Natural killer cell (primary cell): ENCODE measurements at regions of chr1 and their contacts with region 1.

Region 1: GRCh38 chr1:171741872-171742576 is at the start of gene VAMP4:
- DNase-seq: peak; percentile 82 to 92
- ATAC-seq: peak; percentile 86 to 95 (median 90)
- H3K4me3 ChIP-seq: peak within 1 kb of the TSS; percentile 86
- H3K4me3 Mint-ChIP-seq: peak within 1 kb of the TSS; percentile 98
- H3K27ac ChIP-seq: peak within 1 kb of the TSS; percentile 94
- H3K27ac Mint-ChIP-seq: peak within 1 kb of the TSS; percentile 96 to 100
- H3K4me1 ChIP-seq: peaks cover 8% of the 10 kb centered on the region
- H3K4me1 Mint-ChIP-seq: peaks cover 54 to 58% of the 10 kb centered on the region in 2 donors
- H3K27me3 ChIP-seq: no peaks in the 10 kb centered on the region
- H3K27me3 Mint-ChIP-seq: no peaks in the 10 kb centered on the region
- CTCF ChIP-seq: no peak
- total RNA-seq, gene VAMP4: 17.5 to 24.2 (median 20.7) TPM

Region 2: GRCh38 chr1:171654942-171655745 is 86.9 kb before region 1 on chr1:
- intact Hi-C with region 1: loop called (anchors 2 kb)
- DNase-seq: peak; percentile 59 to 69
- ATAC-seq: peak; percentile 68 to 85 (median 69)
- H3K4me3 ChIP-seq: no peak overlapping the region
- H3K4me3 Mint-ChIP-seq: peak overlapping the region; percentile 17
- H3K27ac ChIP-seq: no peak overlapping the region
- H3K27ac Mint-ChIP-seq: no peak overlapping the region
- H3K4me1 ChIP-seq: peaks cover 7% of the 10 kb centered on the region
- H3K4me1 Mint-ChIP-seq: peaks cover 0 to 11% of the 10 kb centered on the region in 2 donors
- H3K27me3 ChIP-seq: no peaks in the 10 kb centered on the region
- H3K27me3 Mint-ChIP-seq: peaks cover 37 to 61% of the 10 kb centered on the region in 2 donors
- CTCF ChIP-seq: peak; percentile 47

Region 3: DNA sequence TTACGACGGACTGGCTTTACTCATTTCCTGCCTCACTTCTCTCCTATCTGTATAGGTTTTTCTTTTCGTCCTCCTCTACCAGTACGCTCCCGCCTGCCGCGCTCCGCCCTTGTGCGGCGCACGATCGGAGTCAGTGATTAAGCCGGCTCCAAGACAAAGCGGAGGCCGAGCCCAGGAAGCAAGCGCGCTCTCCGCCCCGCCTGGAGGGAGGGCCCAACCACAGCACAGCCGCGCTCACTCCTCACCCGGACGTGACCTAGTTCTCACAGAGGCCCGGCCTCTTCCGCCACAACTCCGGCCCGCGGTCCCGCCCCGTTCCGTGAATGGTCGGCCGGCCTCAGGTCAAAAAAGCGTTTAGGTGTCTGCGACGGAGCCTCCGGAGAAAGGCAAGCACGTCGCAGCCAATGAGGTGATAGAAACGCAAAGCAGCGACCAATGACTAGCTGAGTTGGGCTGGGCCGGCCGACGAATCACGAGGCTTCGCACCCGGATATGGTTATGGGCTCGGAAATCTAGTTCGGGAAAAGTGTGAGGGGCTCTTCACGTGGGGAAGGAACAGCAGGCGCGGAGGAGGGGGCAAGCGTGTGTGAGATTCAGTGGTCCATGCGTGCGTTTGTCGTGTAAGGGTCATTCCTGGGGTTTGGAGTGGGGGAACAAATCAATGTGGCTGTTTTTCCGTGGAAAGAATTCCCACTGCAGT is 39.3 kb after region 1 on chr1 and contains the start of gene METTL13:
- intact Hi-C with region 1: loop called (anchors 1 kb)
- DNase-seq: peak; percentile 96 to 99
- ATAC-seq: peak; percentile 92 to 98 (median 93)
- H3K4me3 ChIP-seq: peak within 1 kb of the TSS; percentile 90
- H3K4me3 Mint-ChIP-seq: peak within 1 kb of the TSS; percentile 100
- H3K27ac ChIP-seq: peak within 1 kb of the TSS; percentile 80
- H3K27ac Mint-ChIP-seq: peak within 1 kb of the TSS; percentile 98 to 100
- H3K4me1 ChIP-seq: peaks cover 30% of the 10 kb centered on the region
- H3K4me1 Mint-ChIP-seq: peaks cover 49 to 55% of the 10 kb centered on the region in 2 donors
- H3K27me3 ChIP-seq: no peaks in the 10 kb centered on the region
- H3K27me3 Mint-ChIP-seq: peaks cover 1 to 5% of the 10 kb centered on the region in 2 donors
- CTCF ChIP-seq: no peak
- total RNA-seq, gene METTL13: 12.1 to 23.3 (median 18.2) TPM